RWPE1 (cell line): ENCODE measurements at regions of chr2 and their contacts with region 1.

Region 1: DNA sequence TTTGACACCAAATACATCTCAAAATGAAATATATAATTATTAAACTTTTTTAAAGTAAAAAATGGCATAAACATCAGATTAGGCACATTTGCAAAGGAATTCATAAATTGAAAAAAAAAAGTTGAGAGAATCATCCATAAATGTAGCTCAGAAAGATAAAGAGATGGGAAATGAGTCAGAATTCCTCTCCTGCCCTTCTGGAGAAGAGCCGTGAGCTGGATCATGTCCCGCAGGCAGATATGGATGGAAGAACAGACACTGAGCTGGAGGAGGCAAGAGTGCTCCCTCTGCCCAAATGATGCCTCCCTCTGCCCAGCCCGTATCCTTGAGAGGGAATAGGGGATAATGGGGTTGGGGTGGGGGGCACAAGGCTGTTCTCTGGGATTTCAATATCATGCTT is 190.9 kb downstream of the TFCP2L1 start:
- DNase-seq: no peak
- H3K27ac ChIP-seq: no peak overlapping the region
- CTCF ChIP-seq: no peak

Region 2: DNA sequence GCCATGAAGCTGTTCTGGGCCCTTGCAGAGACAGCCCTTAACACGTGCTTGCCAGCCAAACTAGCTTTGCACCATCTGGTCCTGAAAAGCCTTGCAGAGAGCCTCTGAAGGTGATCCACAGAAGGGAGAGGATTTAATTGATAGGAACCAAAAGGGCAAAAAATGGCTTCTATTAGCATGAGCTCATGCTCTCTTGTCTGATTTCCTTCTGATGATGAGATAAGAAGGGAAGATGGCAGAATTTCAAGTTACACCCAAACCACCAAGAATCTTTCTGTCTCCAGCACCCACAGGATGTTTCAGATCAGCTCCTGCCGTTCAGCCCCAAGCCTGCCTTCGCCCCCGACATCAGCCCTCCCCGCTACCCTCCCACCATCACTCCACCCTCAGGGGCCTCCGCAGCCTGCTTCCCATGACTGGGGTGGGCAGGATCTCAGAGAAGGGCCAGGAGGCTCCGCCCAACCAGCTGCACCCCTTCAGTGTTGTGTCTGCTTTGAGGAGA is 381.9 kb before region 1 on chr2:
- CTCF ChIA-PET with region 1: no interaction called
- POLR2A ChIA-PET with region 1: no interaction called
- DNase-seq: no peak
- H3K27ac ChIP-seq: no peak overlapping the region
- CTCF ChIP-seq: no peak

Region 3: GRCh38 chr2:121104721-121105141 is 10.6 kb after region 1 on chr2:
- CTCF ChIA-PET with region 1: no interaction called
- POLR2A ChIA-PET with region 1: no interaction called
- DNase-seq: no peak
- H3K27ac ChIP-seq: no peak overlapping the region
- CTCF ChIP-seq: no peak

Region 4: GRCh38 chr2:121356058-121356640 is 262.0 kb after region 1 on chr2:
- CTCF ChIA-PET with region 1: interaction called, 10 read pairs
- POLR2A ChIA-PET with region 1: no interaction called
- DNase-seq: peak; percentile 58
- H3K27ac ChIP-seq: no peak overlapping the region
- CTCF ChIP-seq: peak; percentile 80